Keratinocyte (primary cell): ENCODE measurements at regions of chr16 and their contacts with region 1.

Region 1: DNA sequence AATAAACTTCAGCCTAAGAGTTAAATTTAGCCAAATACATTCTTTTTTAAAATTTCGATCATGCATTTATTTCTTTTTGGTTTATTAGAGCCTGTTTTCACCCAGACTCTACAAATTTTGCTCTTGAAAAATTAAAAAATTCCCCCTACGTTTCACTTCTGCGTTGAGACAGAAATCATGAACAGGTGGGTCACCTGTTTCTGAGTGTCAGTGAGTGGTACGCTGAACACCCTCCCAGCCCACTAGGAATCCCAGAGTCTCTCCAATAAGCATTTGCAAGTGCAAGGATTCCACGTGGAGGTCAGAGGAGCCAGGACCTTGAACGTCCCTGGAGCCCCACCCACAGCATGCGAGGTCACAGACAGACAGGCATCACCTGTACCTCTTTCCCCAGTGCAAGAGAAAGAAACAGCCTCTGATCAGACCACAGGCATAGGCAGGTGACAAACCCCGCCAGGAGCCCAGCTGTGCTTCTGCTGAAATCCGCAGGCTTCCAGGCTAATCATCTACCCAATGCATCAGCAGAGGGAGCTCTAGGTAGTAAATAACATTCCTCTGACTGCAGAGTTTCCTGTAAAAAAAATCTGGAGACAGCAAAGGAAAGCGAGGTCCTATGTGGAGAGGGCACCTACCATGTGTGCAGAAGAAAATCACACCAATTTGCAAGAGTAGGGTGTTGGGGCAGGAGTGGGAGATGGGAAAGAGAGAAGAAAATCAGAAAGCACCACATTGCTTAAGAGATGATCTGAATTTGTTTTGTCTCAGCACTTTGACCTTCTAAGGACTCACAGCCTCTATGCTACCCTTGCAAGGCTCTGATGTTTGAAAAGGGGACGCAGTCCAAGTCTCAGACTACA is 5.9 kb upstream of the XYLT1 start:
- DNase-seq: peak; percentile 9
- H3K4me3 ChIP-seq: no peak overlapping the region
- H3K27ac ChIP-seq: no peak overlapping the region
- H3K4me1 ChIP-seq: peaks cover 13% of the 10 kb centered on the region
- H3K27me3 ChIP-seq: no peaks in the 10 kb centered on the region
- CTCF ChIP-seq: peak; percentile 61 to 79 (median 68)

Region 2: GRCh38 chr16:17585449-17586074 is 108.9 kb after region 1 on chr16:
- dilution Hi-C with region 1: loop called (anchors 10 kb)
- DNase-seq: no peak
- H3K4me3 ChIP-seq: no peak overlapping the region
- H3K27ac ChIP-seq: no peak overlapping the region
- H3K4me1 ChIP-seq: no peaks in the 10 kb centered on the region
- H3K27me3 ChIP-seq: no peaks in the 10 kb centered on the region
- CTCF ChIP-seq: no peak